Vagina (tissue), 2 donors: ENCODE measurements at regions of chr14 and their contacts with region 1.

Region 1: GRCh38 chr14:101559624-101560533 is 1.4 kb upstream of the DIO3 start:
- DNase-seq: no peak
- H3K4me3 ChIP-seq: peak overlapping the region; percentile 62 to 82
- H3K27ac ChIP-seq: peak overlapping the region; percentile 90
- H3K4me1 ChIP-seq: peaks cover 50% of the 10 kb centered on the region
- H3K27me3 ChIP-seq: peaks cover 7% of the 10 kb centered on the region
- CTCF ChIP-seq: no peak
- POLR2A ChIP-seq: no peak

Region 2: DNA sequence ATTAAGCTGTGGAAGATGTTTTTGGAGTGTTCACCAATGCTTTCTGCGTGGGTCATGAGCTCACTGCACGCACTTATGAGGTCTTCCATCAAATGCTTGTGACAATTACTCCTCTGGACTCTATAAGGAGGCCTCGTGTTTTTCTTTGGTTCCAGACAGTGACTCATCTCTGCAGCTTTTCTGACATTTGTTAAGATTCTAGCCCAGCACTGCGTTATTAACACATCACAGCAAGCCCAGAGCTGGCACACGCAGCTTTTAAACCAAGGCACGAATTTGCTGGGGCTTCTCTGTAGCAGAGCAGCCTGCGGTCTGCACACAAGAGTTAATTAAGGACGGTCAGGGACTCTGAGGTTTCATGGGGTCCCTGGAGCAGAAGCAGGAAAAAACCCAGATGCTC is 717.1 kb before region 1 on chr14:
- intact Hi-C with region 1: loop called (anchors 10 kb)
- DNase-seq: no peak
- H3K4me3 ChIP-seq: no peak overlapping the region
- H3K27ac ChIP-seq: peak overlapping the region; percentile 79
- H3K4me1 ChIP-seq: peaks cover 24% of the 10 kb centered on the region
- H3K27me3 ChIP-seq: no peaks in the 10 kb centered on the region
- CTCF ChIP-seq: no peak
- POLR2A ChIP-seq: no peak

Region 3: DNA sequence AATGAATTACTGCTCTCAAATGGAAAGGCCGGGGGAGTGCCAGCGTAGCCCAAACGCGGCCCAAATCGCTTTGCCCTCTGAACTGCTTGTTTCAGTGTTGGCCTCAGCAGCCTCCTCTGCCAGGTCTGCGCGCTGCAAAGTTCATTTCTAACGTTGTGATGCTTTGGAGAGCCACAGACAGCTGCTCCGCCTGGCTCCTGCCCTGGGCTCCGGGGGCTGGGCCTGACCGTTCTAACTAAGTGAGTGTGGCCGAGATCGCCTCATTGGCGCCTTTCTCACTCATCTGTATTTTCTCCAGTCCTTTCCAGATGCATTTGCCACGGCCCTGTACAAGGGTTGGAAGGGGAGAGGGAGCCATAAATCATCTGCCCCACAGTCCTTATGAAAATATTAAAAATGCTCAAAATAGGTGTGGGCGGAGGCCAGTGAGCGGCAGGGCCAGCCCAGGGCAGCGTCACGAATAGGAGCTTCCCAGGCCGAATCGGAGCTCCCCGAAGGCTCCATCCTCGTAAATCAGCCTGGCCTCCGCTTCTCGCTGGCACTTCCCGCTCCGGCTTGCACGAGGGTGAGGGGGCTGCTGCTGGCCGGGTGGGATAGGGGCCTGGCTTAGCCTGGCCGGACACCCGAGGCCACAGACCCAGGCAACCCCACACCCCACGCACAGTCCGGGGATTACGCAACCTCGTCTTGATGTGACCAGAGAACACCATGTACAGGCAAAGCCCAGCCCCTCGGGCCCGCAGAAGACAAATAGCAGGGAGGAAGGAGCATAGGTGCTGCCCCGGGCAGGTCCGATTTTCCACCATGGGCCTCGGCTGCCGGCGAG is 195.2 kb before region 1 on chr14:
- intact Hi-C with region 1: loop called (anchors 2 kb)
- DNase-seq: peak; percentile 94 to 98
- H3K4me3 ChIP-seq: peak overlapping the region in 1 of 2 donors; percentile 4
- H3K27ac ChIP-seq: peak overlapping the region; percentile 83
- H3K4me1 ChIP-seq: peaks cover 65% of the 10 kb centered on the region
- H3K27me3 ChIP-seq: no peaks in the 10 kb centered on the region
- CTCF ChIP-seq: no peak
- POLR2A ChIP-seq: no peak

Region 4: GRCh38 chr14:101992708-101993107 is 432.8 kb after region 1 on chr14:
- intact Hi-C with region 1: no loop called
- DNase-seq: no peak
- H3K4me3 ChIP-seq: no peak overlapping the region
- H3K27ac ChIP-seq: no peak overlapping the region
- H3K4me1 ChIP-seq: no peaks in the 10 kb centered on the region
- H3K27me3 ChIP-seq: no peaks in the 10 kb centered on the region
- CTCF ChIP-seq: no peak
- POLR2A ChIP-seq: no peak